A673 (cell line): ENCODE measurements at regions of chr19 and their contacts with region 1.

Region 1: GRCh38 chr19:14494910-14495605 is 869 bp downstream of the GIPC1 start:
- DNase-seq: no peak
- H3K4me3 ChIP-seq: peak overlapping the region; percentile 81
- H3K27ac ChIP-seq: peak overlapping the region; percentile 61
- H3K4me1 ChIP-seq: peaks cover 12% of the 10 kb centered on the region
- H3K27me3 ChIP-seq: no peaks in the 10 kb centered on the region
- CTCF ChIP-seq: no peak

Region 2: DNA sequence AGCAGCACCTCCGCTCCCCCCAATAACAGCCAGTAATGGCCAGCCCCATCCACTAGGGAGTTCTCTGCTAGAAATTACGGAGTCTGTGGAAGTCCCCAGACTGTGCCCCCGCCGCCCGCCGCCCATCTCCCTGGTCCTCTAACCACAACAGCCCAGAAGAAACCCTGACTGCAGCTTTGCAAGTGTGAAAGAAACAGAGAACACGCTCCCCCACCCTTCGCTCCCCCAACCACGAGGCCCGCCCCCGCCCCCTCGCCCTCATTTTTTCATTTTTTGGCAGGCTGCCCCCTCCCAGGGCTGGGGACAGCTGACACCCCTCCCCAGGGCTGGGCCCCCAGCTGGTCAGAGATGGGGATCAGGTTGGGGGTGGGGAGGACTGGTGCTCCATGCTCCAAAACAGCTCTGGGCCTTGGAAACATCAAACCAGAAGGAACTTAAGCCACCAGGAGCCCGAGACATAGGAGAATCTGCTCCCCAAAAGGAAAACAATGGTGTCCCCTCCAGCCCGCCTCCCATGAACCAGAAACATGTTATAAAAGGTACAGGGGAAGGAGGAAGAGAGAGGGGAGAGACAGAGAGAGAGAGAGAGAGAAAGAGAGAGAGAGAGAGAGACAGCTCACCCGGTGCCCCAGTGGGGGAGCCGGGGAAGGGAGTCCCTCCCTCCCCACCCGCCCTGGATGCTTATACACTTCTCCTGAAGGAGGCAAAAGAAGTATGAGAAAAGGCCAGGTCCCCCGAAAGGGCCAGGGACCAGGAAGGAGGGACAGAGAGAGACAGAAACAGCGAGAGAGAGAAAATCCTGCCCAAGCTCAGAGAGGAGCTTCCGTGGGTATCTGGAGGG is 328.8 kb before region 1 on chr19:
- CTCF ChIA-PET with region 1: no interaction called
- POLR2A ChIA-PET with region 1: interaction called, 10 read pairs
- intact Hi-C with region 1: no loop called
- DNase-seq: no peak
- H3K4me3 ChIP-seq: no peak overlapping the region
- H3K27ac ChIP-seq: no peak overlapping the region
- H3K4me1 ChIP-seq: peaks cover 30% of the 10 kb centered on the region
- H3K27me3 ChIP-seq: no peaks in the 10 kb centered on the region
- CTCF ChIP-seq: no peak

Region 3: DNA sequence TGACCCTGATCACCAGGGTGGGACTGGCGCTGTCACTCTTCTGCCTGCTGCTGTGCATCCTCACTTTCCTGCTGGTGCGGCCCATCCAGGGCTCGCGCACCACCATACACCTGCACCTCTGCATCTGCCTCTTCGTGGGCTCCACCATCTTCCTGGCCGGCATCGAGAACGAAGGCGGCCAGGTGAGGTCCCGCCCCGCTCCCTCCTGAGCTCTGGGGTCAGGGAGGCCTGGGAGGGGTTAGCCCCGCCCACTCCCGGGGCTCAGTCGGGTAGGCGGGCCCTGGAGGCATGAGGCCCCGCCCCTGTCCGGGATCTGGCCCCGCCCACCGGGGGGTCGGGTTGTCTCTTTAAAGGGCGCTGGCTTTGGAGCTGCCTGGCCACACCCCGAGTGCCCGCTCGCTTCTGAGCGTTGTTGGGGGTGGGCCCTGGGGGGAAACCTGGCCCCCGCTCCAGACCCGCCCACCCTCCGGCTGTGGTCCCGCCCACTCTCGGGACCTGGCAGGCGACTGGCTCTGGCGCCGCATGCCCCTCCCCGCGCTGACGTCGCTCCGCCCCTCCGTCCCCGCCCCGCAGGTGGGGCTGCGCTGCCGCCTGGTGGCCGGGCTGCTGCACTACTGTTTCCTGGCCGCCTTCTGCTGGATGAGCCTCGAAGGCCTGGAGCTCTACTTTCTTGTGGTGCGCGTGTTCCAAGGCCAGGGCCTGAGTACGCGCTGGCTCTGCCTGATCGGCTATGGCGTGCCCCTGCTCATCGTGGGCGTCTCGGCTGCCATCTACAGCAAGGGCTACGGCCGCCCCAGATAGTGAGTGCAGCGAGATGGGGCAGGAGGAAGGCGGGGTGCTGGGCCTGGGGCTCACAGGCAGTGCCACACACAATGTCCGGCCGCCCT is 89.1 kb before region 1 on chr19:
- CTCF ChIA-PET with region 1: no interaction called
- POLR2A ChIA-PET with region 1: no interaction called
- intact Hi-C with region 1: no loop called
- DNase-seq: peak; percentile 92
- H3K4me3 ChIP-seq: peak overlapping the region; percentile 10
- H3K27ac ChIP-seq: no peak overlapping the region
- H3K4me1 ChIP-seq: peaks cover 4% of the 10 kb centered on the region
- H3K27me3 ChIP-seq: no peaks in the 10 kb centered on the region
- CTCF ChIP-seq: peak; percentile 80